AG04449 (cell line): ENCODE measurements at regions of chr10 and their contacts with region 1.

Region 1: GRCh38 chr10:88553116-88553752 is 29.9 kb downstream of the RNLS start:
- DNase-seq: peak; percentile 56
- H3K4me3 ChIP-seq: no peak overlapping the region
- CTCF ChIP-seq: peak; percentile 75

Region 2: GRCh38 chr10:87850742-87851205 is 702.5 kb before region 1 on chr10:
- CTCF ChIA-PET with region 1: interaction called, 35 read pairs
- POLR2A ChIA-PET with region 1: no interaction called
- DNase-seq: no peak
- H3K4me3 ChIP-seq: no peak overlapping the region
- CTCF ChIP-seq: peak; percentile 65

Region 3: GRCh38 chr10:87861953-87862678 is 691.1 kb before region 1 on chr10:
- CTCF ChIA-PET with region 1: interaction called, 14 read pairs
- POLR2A ChIA-PET with region 1: no interaction called
- DNase-seq: peak; percentile 83
- H3K4me3 ChIP-seq: peak overlapping the region; percentile 91
- CTCF ChIP-seq: peak; percentile 11

Region 4: GRCh38 chr10:88386821-88387773 is 166.1 kb before region 1 on chr10:
- CTCF ChIA-PET with region 1: interaction called, 15 read pairs
- POLR2A ChIA-PET with region 1: no interaction called
- DNase-seq: no peak
- H3K4me3 ChIP-seq: no peak overlapping the region
- CTCF ChIP-seq: no peak

Region 5: DNA sequence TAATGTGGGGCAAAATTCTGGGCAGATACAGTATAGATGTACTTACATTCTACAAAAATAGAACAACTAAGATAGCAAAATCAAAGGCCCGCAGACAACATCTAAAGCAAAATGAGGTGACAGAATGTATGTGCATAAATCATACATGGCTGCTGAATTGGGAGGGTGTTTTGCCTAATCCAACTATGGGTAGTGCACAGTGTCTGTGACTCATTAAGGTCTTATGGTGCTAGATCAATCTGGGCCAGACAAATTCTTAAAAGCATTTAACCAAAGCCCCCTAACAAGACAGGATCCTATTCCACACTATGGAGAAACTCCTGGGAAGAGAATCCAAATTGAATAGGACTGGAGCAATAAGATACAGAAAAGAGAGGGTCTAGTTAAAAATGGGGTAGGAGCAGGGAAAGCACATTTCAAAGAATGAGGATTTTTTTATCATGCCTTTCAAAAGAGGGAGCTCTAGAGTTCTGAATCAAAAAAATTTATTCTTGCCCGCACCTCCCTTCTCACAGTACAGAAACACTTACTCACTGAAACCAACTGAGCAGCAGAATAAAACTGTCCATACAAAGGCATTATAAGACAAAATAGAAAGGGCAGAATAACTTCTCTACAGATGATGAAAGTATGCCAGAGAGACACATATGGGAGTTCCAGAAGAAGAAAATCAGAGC is 151.4 kb before region 1 on chr10:
- CTCF ChIA-PET with region 1: interaction called, 13 read pairs
- POLR2A ChIA-PET with region 1: no interaction called
- DNase-seq: no peak
- H3K4me3 ChIP-seq: no peak overlapping the region
- CTCF ChIP-seq: peak; percentile 23

Region 6: DNA sequence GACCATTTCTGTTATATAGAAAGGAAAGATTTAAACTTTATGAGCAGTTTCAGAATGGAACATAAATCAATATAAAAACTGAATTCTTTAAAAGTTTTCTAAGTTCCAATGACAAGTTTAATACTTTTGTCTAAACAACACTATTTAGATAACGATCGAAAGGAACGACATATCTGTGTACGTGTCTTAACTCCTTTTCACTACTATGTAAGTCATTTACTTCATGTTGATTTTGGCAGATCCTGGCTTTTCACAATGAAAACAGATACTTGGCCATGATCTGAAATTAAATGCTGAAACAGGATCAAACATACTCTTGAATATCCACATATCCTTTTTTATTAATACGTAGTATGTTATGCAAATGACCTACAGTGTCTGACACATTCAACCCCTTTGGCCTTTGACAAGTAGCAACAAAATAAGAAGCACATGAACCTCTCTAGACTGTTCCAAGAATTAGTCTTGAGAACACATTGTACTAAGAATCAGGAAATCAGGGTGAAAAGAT is 12.1 kb before region 1 on chr10:
- CTCF ChIA-PET with region 1: interaction called, 24 read pairs
- POLR2A ChIA-PET with region 1: no interaction called
- DNase-seq: no peak
- H3K4me3 ChIP-seq: no peak overlapping the region
- CTCF ChIP-seq: no peak

Region 7: DNA sequence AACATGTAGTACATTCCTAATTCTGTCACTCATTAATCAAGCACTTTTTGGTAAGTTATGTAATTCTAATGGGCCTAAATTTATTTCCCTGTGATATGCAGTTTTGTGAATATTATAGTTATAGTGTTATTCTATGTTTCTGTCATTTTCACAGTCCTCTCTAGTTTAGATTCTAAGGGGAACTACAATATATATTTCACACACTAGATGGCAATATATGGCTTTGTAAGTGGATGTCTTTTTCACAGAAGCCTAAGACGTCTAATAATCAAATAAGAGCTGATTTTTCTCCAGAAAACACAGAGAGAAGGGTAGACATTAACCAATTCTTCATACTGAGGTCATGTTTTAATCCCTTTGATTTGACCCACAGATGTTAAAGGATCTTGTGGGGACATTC is 11.8 kb after region 1 on chr10:
- CTCF ChIA-PET with region 1: interaction called, 12 read pairs
- POLR2A ChIA-PET with region 1: no interaction called
- DNase-seq: no peak
- H3K4me3 ChIP-seq: no peak overlapping the region
- CTCF ChIP-seq: peak; percentile 14